IMR-90 (cell line): ENCODE measurements at regions of chrX and their contacts with region 1.

Region 1: GRCh38 chrX:130339408-130340222 is at the start of gene SLC25A14:
- DNase-seq: peak; percentile 66
- ATAC-seq: peak; percentile 91
- H3K4me3 ChIP-seq: peak within 1 kb of the TSS; percentile 86
- H3K27ac ChIP-seq: peak within 1 kb of the TSS; percentile 2; the same call in 1 of the 2 replicates
- H3K4me1 ChIP-seq: no peaks in the 10 kb centered on the region
- H3K27me3 ChIP-seq: peaks cover 2% of the 10 kb centered on the region; the same call in 1 of the 2 replicates
- CTCF ChIP-seq: no peak
- POLR2A ChIP-seq: no peak
- RAD21 ChIP-seq: no peak
- total RNA-seq, gene SLC25A14: 13.8 and 17.2 TPM in 2 replicates

Region 2: GRCh38 chrX:130268500-130269170 is 71.0 kb before region 1 on chrX and contains the start of gene ZNF280C:
- CTCF ChIA-PET with region 1: no interaction called
- POLR2A ChIA-PET with region 1: no interaction called
- dilution Hi-C with region 1: no loop called
- in situ Hi-C with region 1: no loop called
- intact Hi-C with region 1: loop called (anchors 2 kb)
- DNase-seq: peak; percentile 91
- ATAC-seq: peak; percentile 97
- H3K4me3 ChIP-seq: peak within 1 kb of the TSS; percentile 91
- H3K27ac ChIP-seq: peak within 1 kb of the TSS; percentile 80
- H3K4me1 ChIP-seq: no peaks in the 10 kb centered on the region
- H3K27me3 ChIP-seq: no peaks in the 10 kb centered on the region; the same call in 1 of the 2 replicates
- CTCF ChIP-seq: peak; percentile 42
- POLR2A ChIP-seq: peak; percentile 97
- RAD21 ChIP-seq: no peak; the same call in 1 of the 2 replicates
- total RNA-seq, gene ZNF280C: 4.5 and 6.1 TPM in 2 replicates

Region 3: DNA sequence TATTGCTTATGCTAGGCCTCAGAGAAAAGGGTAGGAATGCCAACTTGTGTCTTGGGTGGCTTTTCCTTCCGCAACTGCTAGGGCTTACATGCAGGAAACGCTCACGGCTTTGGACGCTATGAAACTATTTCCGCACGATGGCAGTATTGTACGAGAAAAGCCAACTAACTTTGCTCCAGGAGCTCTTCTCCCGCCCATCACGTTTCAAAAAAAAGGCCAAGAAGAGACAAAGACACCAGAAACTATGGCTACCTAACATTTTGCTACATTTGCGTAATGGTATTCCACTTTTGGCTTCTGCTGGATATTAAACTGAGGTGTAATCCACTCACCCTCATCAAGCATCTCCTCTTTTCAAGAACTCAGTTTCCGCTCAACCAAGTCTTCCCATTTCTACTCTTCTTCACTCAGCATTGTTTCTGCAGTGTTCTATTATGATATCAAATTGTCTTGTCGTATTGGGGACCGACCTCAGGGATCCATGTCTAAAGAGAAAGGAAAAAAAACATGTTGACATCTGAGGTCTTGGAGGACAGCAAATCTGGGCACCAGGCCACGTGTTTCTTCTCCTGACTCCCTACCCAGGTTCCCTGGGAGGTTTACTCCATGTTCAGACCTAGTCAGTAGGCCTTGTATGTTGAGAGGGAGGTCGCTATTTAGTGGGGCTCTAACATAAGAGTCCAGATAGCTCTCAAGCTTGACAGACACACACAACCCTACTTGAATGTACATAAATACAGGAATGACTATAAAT is 1444.1 kb after region 1 on chrX:
- CTCF ChIA-PET with region 1: no interaction called
- POLR2A ChIA-PET with region 1: no interaction called
- dilution Hi-C with region 1: no loop called
- in situ Hi-C with region 1: no loop called
- intact Hi-C with region 1: no loop called
- DNase-seq: peak; percentile 89
- ATAC-seq: peak; percentile 66
- H3K4me3 ChIP-seq: peak overlapping the region; percentile 18; the same call in 1 of the 2 replicates
- H3K27ac ChIP-seq: no peak overlapping the region
- H3K4me1 ChIP-seq: 0 out of 2 replicates have a peak, but pooled peaks cover 2% of the 10 kb centered on the region
- H3K27me3 ChIP-seq: 0 out of 2 replicates have a peak, but pooled peaks cover 1% of the 10 kb centered on the region
- CTCF ChIP-seq: peak; percentile 72
- POLR2A ChIP-seq: no peak; the same call in 1 of the 2 replicates
- RAD21 ChIP-seq: peak; percentile 78